ENCODE measurements at regions of chr13 and their contacts with region 1.

Region 1: GRCh38 chr13:35164324-35164932 is 222.4 kb downstream of the NBEA start:
- DNase-seq: peak; percentile 46
- H3K4me3 Mint-ChIP-seq: no peak overlapping the region
- H3K27ac Mint-ChIP-seq: no peak overlapping the region
- H3K4me1 Mint-ChIP-seq: no peaks in the 10 kb centered on the region
- H3K27me3 Mint-ChIP-seq: no peaks in the 10 kb centered on the region
- CTCF ChIP-seq: peak; percentile 66

Region 2: DNA sequence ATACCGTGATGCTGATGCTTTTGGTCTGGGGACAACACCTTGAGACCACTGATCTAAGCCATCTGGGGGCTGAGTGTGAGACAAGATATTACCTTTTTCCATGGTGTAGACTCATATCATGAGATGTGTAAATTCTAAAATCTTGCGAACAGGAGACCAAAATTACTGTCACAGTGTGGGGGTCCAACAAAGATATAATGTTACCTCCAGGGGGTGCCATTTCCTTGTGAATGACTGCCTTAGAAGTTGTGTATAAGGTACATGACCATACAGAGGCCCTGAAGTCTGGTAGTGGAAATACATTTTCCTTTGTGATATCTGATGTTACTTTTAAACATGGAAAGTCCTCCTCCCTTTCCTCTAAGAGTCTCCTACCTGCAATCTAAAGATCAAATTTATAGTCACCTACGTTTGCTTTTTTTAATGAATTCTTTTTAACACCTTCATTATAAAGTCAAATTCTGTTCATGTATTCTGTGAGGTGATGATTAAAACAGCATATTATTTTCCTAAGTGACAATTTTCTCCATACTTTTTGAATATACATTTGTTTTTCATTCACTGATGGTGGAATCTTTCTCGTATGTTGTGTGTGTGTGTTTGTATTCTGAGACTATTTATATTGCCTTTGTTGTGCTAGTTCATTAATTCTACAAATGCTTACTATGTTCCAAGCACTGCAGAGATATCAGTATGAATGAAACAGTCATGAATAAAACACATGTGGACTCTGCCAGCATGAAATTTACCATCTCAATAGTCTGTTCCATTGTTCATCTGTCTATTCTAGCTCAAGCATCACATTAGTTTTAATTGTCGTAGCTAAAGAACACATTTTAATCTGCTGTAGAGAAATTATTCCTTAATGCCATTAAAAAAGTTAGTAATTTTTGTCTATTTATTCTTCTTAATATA is 1232.8 kb before region 1 on chr13:
- CTCF ChIA-PET with region 1: interaction called, 7 read pairs
- POLR2A ChIA-PET with region 1: no interaction called
- intact Hi-C with region 1: loop called (anchors 2 kb)
- DNase-seq: peak; percentile 71
- H3K4me3 Mint-ChIP-seq: no peak overlapping the region
- H3K27ac Mint-ChIP-seq: no peak overlapping the region
- H3K4me1 Mint-ChIP-seq: no peaks in the 10 kb centered on the region
- H3K27me3 Mint-ChIP-seq: no peaks in the 10 kb centered on the region
- CTCF ChIP-seq: peak; percentile 56

Region 3: DNA sequence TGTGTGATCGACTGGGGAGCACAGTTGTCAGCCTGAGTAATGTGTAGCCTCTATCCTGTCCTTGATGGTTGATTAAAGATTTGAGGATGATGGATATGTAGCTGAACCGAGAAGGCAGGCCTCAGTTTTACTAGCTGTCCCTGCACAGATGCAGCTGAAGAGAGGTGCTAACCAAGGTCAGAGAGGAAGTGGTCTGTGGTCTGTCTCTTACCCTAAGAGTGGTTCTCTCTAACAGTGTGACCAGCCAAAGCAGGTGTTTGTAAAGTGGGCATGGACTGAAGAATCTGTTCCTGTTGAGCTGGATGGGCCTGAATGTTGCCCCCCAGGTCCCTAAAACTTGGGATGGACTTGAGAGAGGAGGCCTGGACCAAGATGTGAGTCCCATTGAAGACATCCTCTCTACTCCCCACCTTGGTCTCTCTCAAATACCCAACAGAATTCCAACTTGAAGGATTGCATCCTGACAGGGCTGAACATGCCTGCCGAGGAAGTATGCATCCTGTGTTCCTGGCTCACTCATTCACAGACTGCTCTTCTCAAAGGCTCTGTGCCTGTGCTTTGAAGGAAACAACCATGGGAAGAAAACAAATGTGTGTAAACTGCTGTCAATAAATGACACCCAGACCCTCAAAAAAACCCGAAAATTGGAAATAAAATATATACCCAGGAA is 88.2 kb after region 1 on chr13:
- CTCF ChIA-PET with region 1: no interaction called
- POLR2A ChIA-PET with region 1: no interaction called
- intact Hi-C with region 1: no loop called
- DNase-seq: no peak
- H3K4me3 Mint-ChIP-seq: no peak overlapping the region
- H3K27ac Mint-ChIP-seq: no peak overlapping the region
- H3K4me1 Mint-ChIP-seq: no peaks in the 10 kb centered on the region
- H3K27me3 Mint-ChIP-seq: no peaks in the 10 kb centered on the region
- CTCF ChIP-seq: no peak